ENCODE measurements at regions of chr11 and their contacts with region 1.

Region 1: DNA sequence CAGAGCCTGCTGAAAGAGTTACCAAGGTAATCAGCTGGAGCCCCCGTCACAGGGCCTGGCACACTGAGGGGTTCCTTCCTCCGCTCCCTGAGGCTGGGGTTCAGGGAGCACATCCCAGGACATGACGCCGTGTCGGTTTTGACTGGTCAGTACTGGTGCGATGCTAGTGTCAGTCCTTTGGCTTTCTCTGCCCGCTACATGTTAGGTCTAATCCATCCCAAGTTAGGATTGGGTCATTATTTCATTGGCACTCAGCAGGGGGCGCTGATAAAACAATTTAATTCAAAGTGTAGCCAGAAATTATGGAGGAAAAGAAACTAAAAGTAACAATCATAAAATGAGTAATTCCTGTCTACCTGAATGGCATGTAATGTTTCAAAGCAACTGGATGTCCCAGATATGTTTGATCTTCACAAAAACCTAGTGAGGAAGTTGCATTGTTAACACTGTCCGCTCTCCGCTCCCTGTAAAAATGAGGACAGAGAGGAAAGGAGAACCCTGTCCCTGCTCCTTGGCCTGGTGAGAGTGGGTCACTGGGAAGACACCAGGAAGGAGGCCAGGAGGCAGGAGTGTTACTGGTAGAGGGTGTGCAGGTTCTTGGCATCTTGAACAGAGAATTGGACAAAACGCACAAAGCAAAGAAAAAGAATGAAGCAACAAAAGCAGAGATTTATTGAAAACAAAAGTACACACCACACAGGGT is 27.1 kb downstream of the TSKU start:
- DNase-seq: peak; percentile 57
- H3K4me3 ChIP-seq: no peak overlapping the region
- H3K27ac ChIP-seq: no peak overlapping the region
- H3K4me1 ChIP-seq: 0 out of 2 replicates have a peak, but pooled peaks cover 7% of the 10 kb centered on the region
- H3K27me3 ChIP-seq: no peaks in the 10 kb centered on the region

Region 2: GRCh38 chr11:76469141-76469540 is 341.2 kb before region 1 on chr11:
- in situ Hi-C with region 1: no loop called
- DNase-seq: no peak
- H3K4me3 ChIP-seq: no peak overlapping the region
- H3K27ac ChIP-seq: no peak overlapping the region
- H3K4me1 ChIP-seq: no peaks in the 10 kb centered on the region
- H3K27me3 ChIP-seq: no peaks in the 10 kb centered on the region

Region 3: DNA sequence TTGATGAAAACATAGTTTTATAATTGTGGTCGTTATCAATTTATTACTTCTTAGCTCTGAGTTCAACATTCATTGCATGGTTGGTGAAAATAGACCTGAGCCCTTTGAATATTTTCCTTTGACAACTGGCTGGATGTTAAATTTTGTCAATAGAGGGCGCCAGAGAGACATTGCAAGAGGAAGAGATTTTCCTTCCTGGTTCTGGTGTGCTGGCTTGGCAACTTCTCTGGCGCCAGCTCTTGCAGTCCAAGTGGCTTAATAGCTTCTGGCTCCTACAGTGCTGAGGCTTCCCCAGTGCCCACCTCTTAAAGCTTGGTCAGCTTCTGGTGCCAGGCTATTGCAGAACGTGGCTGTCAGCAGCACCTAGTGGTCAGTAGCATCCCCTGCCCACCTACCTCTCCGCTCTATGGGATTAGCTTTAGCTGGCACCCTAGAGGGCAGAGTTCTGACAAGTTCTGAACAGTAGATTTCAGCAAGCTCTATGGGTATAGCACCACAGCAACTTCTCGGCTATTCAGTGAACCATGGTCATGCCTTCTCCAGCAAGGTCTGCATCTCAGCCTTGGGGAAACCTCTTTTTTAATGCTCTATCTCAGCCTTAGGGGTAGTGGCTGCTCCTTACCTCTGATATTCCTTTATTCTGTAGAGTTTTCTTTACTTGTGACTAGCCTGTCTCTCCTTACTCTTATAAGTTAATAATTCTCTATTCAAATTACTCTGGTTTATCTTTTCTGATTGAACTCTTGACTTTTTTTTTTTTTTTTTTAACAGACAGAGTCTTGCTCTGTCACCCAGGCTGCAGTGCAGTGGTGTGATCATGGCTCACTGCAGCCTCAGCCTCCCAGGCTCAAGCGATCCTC is 109.8 kb after region 1 on chr11:
- in situ Hi-C with region 1: loop called (anchors 10 kb)
- DNase-seq: peak; percentile 93
- H3K4me3 ChIP-seq: peak overlapping the region; percentile 36; the same call in 1 of the 2 replicates
- H3K27ac ChIP-seq: no peak overlapping the region
- H3K4me1 ChIP-seq: peaks cover 11% of the 10 kb centered on the region; the same call in 1 of the 2 replicates
- H3K27me3 ChIP-seq: no peaks in the 10 kb centered on the region

Region 4: DNA sequence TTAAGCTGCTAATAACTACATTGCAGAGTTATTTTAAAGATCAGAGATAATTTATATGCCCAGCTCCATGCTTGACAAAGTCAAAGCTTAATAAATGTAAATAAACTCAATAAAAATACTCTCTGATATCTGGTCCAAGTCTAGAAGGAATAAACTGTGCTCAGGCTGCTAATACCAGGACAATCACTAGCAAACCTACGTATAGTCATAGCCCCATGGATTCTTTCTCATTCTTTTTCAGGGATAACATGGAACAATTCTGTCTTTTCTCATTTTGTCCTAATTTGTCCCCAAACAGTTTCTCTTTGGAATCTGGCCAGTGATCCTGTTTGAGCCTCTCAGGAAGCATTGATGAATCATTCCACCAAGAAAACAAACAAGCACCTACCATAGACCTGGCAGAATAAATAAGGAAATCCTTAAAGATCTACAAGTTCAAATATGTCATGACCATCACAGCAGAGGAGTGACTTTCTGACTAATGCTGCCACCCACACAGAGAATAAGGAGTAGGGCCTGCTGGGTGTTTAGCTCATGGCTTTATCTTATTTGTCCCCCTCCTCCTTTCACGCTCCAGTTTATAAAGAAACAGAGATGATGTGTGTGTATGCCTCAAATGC is 209.8 kb after region 1 on chr11:
- in situ Hi-C with region 1: loop called (anchors 10 kb)
- DNase-seq: peak; percentile 41
- H3K4me3 ChIP-seq: no peak overlapping the region
- H3K27ac ChIP-seq: no peak overlapping the region
- H3K4me1 ChIP-seq: peaks cover 11% of the 10 kb centered on the region
- H3K27me3 ChIP-seq: no peaks in the 10 kb centered on the region

Measured in GM23248 (cell line).